ENCODE measurements at regions of chr14 and their contacts with region 1.

Region 1: GRCh38 chr14:61561657-61562276 is 133.5 kb upstream of the HIF1A start:
- DNase-seq: no peak
- H3K4me3 Mint-ChIP-seq: peak overlapping the region; percentile 5
- H3K27ac Mint-ChIP-seq: peak overlapping the region; percentile 70
- H3K4me1 Mint-ChIP-seq: peaks cover 60% of the 10 kb centered on the region
- H3K27me3 Mint-ChIP-seq: no peaks in the 10 kb centered on the region

Region 2: DNA sequence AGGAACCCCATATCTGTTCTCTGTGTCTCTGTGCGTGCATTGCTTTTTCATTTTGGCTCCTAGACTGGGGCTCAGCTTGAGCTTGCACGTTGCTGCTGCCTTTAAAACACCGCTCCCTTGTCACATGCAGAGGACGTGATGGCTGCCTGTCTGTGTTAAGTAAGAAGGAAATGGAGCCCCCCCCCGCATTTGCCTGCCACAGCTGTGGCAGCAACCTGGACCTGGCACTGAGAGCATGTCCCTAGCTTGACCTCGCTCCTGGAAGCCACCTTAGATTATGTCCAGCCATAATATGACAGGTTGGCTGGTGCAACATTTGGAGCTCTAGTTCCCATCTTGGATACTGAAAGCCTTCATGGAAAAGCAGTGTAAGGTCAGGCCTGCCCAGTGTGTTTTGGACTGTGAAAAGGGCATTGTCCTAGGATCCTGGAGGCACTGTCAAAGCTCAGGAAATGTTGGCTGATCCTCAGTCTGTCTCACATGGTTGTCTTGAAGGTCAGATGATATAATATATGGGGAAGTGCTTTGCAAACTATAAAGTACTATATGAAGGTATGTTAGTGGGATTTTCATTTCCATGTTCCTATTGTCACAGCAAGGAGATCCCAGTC is 166.5 kb before region 1 on chr14:
- intact Hi-C with region 1: no loop called
- DNase-seq: no peak
- H3K4me3 Mint-ChIP-seq: no peak overlapping the region
- H3K27ac Mint-ChIP-seq: no peak overlapping the region
- H3K4me1 Mint-ChIP-seq: peaks cover 75% of the 10 kb centered on the region
- H3K27me3 Mint-ChIP-seq: no peaks in the 10 kb centered on the region

Region 3: GRCh38 chr14:61503167-61503801 is 58.5 kb before region 1 on chr14:
- intact Hi-C with region 1: loop called (anchors 2 kb)
- DNase-seq: peak; percentile 84
- H3K4me3 Mint-ChIP-seq: peak overlapping the region; percentile 76
- H3K27ac Mint-ChIP-seq: peak overlapping the region; percentile 95
- H3K4me1 Mint-ChIP-seq: peaks cover 79% of the 10 kb centered on the region
- H3K27me3 Mint-ChIP-seq: no peaks in the 10 kb centered on the region

Region 4: GRCh38 chr14:61533511-61534510 is 28.0 kb before region 1 on chr14:
- intact Hi-C with region 1: no loop called
- DNase-seq: no peak
- H3K4me3 Mint-ChIP-seq: peak overlapping the region; percentile 17
- H3K27ac Mint-ChIP-seq: peak overlapping the region; percentile 76
- H3K4me1 Mint-ChIP-seq: peaks cover 73% of the 10 kb centered on the region
- H3K27me3 Mint-ChIP-seq: no peaks in the 10 kb centered on the region

Region 5: DNA sequence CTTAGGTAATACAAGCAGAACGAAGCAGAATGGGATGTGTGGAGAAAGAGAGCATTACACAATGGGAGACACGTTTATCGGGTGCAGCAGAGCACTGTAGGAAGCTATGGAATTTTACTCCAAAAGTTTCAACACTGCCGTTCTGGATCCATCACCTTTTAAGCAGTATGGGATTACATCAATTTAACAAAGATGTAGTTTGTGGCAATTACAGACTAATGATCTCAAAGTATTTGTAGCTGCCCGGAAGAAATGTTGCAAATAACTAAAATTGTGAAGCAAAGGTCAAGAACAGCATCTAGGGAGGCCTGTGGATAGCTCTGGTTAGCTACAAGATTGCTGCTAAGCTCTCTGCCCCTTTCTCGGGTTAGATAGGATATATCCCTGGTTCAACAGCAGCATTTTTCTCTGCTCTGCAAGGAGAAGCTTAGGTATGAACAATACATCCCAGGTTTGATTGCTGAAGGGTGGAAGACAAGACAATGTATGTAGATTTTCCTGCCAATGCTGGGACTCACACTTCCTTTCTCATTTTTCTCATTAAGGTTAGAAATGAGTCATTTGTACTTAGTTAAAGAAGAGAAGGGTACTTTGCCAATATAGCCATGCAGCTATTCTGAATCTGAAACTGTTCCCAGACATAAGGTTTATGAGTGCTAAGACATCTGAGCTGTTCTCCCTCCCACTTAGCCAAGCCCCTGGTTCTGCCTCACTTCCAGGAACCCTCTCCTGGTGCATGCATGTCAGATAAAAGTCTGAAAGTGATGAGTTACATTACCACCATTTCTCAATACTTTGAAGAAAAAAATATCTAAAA is 58.6 kb after region 1 on chr14:
- intact Hi-C with region 1: loop called (anchors 2 kb)
- DNase-seq: peak; percentile 69
- H3K4me3 Mint-ChIP-seq: peak overlapping the region; percentile 39
- H3K27ac Mint-ChIP-seq: peak overlapping the region; percentile 74
- H3K4me1 Mint-ChIP-seq: peaks cover 34% of the 10 kb centered on the region
- H3K27me3 Mint-ChIP-seq: no peaks in the 10 kb centered on the region

Measured in activated CD4-positive, alpha-beta T cell treated with anti-CD3 and anti-CD28 coated beads, Interleukin-2, amount 10 ng/mL, durations not matched to agents 24 days and 14 days (primary cell).